ENCODE measurements at regions of chr17 and their contacts with region 1.

Region 1: GRCh38 chr17:81396722-81397313 is 1.6 kb downstream of the BAHCC1 start:
- DNase-seq: peak in 18 of 35 experiments; percentile 15 to 61 (median 32)
- ATAC-seq: peak in 3 of 4 experiments; percentile 28 to 36 (median 34)
- H3K4me3 ChIP-seq: peak overlapping the region in 1 of 2 donors; percentile 57
- H3K4me3 Mint-ChIP-seq: peak overlapping the region in 2 of 3 donors; percentile 31 to 47
- H3K27ac ChIP-seq: no peak overlapping the region
- H3K27ac Mint-ChIP-seq: no peak overlapping the region
- H3K4me1 ChIP-seq: peaks cover 20 to 71% of the 10 kb centered on the region in 2 experiments
- H3K4me1 Mint-ChIP-seq: peaks cover 30 to 38% (median 31%) of the 10 kb centered on the region in 3 donors
- H3K27me3 ChIP-seq: peaks cover 4 to 86% of the 10 kb centered on the region in 2 experiments
- H3K27me3 Mint-ChIP-seq: peaks cover 31 to 63% of the 10 kb centered on the region in 2 donors

Region 2: GRCh38 chr17:81517339-81518112 is 120.7 kb after region 1 on chr17:
- CTCF ChIA-PET with region 1: no interaction called
- POLR2A ChIA-PET with region 1: interaction called in 1 of 2 experiments, 11 read pairs
- DNase-seq: peak in 1 of 35 experiments; percentile 32
- ATAC-seq: no peak
- H3K4me3 ChIP-seq: no peak overlapping the region
- H3K4me3 Mint-ChIP-seq: peak overlapping the region; percentile 22 to 63 (median 51)
- H3K27ac ChIP-seq: no peak overlapping the region
- H3K27ac Mint-ChIP-seq: peak overlapping the region; percentile 62 to 82
- H3K4me1 ChIP-seq: peaks cover 5 to 64% of the 10 kb centered on the region in 2 experiments
- H3K4me1 Mint-ChIP-seq: peaks cover 19 to 31% (median 28%) of the 10 kb centered on the region in 3 donors
- H3K27me3 ChIP-seq: peaks cover 0 to 7% of the 10 kb centered on the region in 2 experiments
- H3K27me3 Mint-ChIP-seq: peaks cover 0 to 2% of the 10 kb centered on the region in 2 donors

Measured in T-cell (primary cell).